Uterus (tissue), 4 donors: ENCODE measurements at regions of chr1 and their contacts with region 1.

Region 1: DNA sequence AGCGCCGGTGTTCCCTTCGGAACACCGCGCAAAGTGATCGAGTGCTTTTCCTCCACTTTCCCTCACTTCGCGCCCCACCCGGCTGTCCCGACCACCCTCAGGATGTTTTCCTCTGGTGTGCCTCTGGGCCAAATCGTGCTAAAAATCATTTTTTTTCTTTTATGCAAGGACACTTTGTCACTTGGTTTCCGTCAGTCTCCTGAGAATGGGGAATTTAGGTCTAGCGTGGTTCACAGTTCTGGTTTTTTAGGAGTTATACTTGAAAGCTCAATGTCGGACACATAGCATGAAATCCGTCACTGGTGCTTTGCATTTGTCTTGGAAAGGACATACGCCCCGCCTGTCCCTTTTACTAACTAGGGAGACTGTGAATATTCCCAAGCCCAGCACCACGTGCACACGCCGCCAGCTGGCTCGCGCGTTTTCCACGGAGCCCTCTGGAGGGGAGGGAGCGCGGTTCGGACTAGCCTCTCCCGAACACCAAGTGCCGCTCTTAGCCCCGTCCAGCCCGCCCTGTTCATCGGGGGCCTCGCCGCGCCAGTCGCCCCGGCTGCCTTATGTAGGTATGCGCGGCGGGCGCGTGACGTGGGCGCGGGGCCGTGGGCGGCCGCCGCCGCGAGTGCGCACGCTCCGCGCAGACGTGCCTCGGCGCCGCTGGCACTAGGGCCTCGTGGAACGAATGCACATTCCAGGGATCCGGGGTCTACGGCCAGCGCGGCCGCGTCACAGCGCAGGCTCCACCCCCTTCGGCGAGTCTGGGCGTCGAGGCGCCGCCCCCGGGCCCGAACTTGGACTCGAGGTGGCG is 572 bp upstream of the IRF2BP2 start:
- DNase-seq: peak; percentile 94 to 97
- H3K4me3 ChIP-seq: peak overlapping the region; percentile 52 to 53
- H3K27ac ChIP-seq: peak overlapping the region; percentile 98 to 100
- H3K4me1 ChIP-seq: peaks cover 6 to 7% of the 10 kb centered on the region in 2 donors
- H3K27me3 ChIP-seq: no peaks in the 10 kb centered on the region
- CTCF ChIP-seq: peak in 2 of 4 experiments; percentile 2 to 38
- POLR2A ChIP-seq: peak; percentile 89 to 96

Region 2: DNA sequence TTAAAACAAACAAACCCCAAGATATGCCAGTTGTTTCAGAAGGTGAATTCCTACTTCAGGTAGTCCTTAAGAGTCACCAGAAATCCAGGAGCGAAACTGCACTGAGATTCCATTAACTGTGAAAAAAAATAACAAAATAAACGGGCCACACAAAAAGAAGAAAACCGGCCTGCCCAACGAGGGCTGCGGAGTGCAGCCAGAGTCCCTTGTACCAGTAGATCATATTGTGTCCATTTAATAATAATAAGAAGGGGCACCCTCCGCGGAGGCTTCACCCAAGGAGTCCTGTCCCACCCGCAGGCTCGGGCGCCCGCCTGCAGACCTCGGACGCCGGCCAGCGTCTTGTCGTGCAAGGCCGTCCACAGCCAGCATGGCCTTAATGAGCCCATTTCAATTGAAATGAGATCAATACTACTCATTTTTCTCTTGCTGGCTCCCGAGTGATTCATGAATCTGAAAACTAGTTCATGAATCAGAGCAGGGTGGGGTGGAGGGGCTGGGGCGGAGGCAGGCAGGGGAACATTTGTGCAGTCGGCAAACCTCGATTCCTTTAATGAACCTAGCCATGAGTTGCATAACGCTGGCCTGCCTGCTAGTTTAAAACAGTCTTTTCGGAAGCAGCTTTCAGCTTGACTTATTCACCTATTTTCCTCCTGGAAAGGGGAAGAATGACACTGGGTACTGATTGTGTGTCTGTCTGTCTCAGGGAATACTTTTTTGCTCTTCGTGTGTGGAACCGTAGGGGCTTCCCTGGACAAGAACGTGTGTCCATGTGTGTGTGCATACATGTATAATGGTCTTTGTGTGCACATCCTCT is 112.6 kb after region 1 on chr1:
- intact Hi-C with region 1: loop called (anchors 2 kb)
- DNase-seq: peak; percentile 78 to 89
- H3K4me3 ChIP-seq: no peak overlapping the region
- H3K27ac ChIP-seq: peak overlapping the region; percentile 96 to 98
- H3K4me1 ChIP-seq: peaks cover 25 to 59% of the 10 kb centered on the region in 2 donors
- H3K27me3 ChIP-seq: no peaks in the 10 kb centered on the region
- CTCF ChIP-seq: peak in 1 of 4 experiments; percentile 5
- POLR2A ChIP-seq: no peak

Region 3: GRCh38 chr1:234851450-234852438 is 241.2 kb after region 1 on chr1:
- intact Hi-C with region 1: no loop called
- DNase-seq: no peak
- H3K4me3 ChIP-seq: no peak overlapping the region
- H3K27ac ChIP-seq: no peak overlapping the region
- H3K4me1 ChIP-seq: no peaks in the 10 kb centered on the region
- H3K27me3 ChIP-seq: no peaks in the 10 kb centered on the region
- CTCF ChIP-seq: no peak
- POLR2A ChIP-seq: no peak

Region 4: DNA sequence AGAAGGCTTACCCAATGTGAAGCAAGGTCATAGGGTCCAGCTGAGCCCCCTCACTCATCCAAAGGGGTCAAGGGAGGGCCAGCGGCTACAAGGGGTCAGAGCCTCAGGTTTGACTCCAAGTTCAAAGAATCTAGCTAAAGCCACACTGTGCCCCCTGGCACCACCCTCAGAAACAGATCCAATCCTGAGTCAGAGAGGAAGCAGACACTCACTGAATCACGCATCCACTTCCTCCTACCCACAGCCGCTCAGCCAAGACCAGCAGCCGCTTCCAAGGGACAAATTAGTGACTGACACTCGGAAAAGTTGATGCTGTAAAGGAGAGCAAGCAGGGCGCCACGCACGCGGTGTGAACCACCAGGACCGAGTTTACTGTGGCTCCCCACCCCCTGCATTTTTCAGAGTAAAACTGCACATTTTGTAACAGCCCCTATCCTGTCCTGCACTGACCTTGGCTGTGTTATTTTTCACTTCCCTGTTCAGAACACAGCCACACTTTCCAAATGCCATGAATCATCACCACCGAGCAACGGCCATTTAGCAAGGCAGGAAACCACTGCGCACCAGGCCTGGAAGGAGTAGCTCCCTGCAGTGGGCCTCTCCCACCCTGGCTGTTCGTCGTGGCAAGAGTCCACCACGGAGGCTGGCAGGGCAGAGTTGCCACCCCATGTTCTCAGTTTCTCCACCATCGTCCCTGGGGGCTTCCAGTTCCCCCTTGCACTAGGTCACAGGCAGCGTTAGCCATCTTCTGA is 370.3 kb after region 1 on chr1:
- intact Hi-C with region 1: loop called (anchors 5 kb)
- DNase-seq: peak; percentile 83 to 92
- H3K4me3 ChIP-seq: no peak overlapping the region
- H3K27ac ChIP-seq: peak overlapping the region; percentile 92 to 93
- H3K4me1 ChIP-seq: peaks cover 18 to 33% of the 10 kb centered on the region in 2 donors
- H3K27me3 ChIP-seq: no peaks in the 10 kb centered on the region
- CTCF ChIP-seq: no peak
- POLR2A ChIP-seq: peak in 1 of 2 donors; percentile 7

Region 5: GRCh38 chr1:234997201-234997895 is 386.8 kb after region 1 on chr1:
- intact Hi-C with region 1: loop called (anchors 5 kb)
- DNase-seq: peak; percentile 96 to 99
- H3K4me3 ChIP-seq: no peak overlapping the region
- H3K27ac ChIP-seq: peak overlapping the region; percentile 87 to 96
- H3K4me1 ChIP-seq: peaks cover 7 to 10% of the 10 kb centered on the region in 2 donors
- H3K27me3 ChIP-seq: no peaks in the 10 kb centered on the region
- CTCF ChIP-seq: no peak
- POLR2A ChIP-seq: peak; percentile 38 to 45